ENCODE measurements at regions of chr2 and their contacts with region 1.

Region 1: DNA sequence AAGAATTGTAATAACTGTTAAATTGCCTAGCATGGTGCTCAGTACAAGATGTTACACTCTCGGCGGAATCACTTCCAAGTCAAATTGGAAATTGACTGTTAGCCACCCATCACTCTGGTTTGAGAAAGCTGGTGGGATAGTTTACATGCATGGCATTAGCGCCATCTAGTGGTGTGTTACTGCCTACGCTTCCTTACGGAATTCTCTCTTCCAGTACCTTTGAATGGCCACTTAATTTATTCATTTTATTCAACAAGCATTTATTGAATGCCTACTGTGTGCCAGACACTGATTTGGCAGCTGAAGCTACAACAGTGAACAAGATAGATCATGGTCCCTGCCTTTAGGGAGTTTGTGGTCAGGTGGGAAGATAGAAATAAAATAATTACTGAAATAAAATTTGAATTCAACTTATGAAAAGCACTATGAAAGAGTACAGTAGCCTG is 171.2 kb downstream of the TMEM247 start:
- DNase-seq: no peak
- H3K4me3 ChIP-seq: no peak overlapping the region
- H3K27ac ChIP-seq: no peak overlapping the region
- H3K4me1 ChIP-seq: peaks cover 0 to 19% (median 6%) of the 10 kb centered on the region in 6 donors
- H3K27me3 ChIP-seq: no peaks in the 10 kb centered on the region
- CTCF ChIP-seq: peak; percentile 88 to 98 (median 94)
- POLR2A ChIP-seq: no peak

Region 2: DNA sequence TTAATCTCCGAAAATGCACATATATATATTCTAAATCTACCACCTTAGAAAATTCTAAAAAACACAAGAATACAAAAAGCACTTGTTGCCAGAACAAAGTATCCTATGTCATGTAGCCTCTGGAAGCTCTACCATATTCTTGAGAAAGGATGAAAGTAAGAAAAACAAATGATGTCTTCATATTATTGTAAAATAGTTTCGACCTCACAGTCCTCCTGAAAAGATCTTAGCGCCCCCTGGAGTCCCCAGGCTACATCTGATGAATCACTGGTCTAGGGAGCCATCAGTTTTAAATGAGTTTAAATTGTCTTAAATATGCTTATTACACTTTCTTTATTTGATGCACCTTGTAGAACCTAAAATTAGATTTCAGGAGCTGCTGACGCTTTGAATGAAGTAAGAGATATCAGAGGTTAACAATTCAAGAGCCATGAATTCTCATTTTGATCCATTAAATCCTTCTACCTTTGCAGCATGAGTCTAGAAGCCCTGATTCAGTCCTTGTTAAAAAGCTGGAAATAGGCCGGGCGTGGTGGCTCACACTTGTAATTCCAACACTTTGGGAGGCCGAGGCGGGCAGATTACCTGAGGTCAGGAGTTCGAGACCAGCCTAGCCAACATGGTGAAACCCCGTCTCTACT is 126.2 kb after region 1 on chr2:
- intact Hi-C with region 1: loop called (anchors 10 kb)
- DNase-seq: no peak
- H3K4me3 ChIP-seq: no peak overlapping the region
- H3K27ac ChIP-seq: no peak overlapping the region
- H3K4me1 ChIP-seq: peaks cover 0 to 48% (median 9%) of the 10 kb centered on the region in 6 donors
- H3K27me3 ChIP-seq: peaks cover 0 to 4% (median 0%) of the 10 kb centered on the region in 7 donors
- CTCF ChIP-seq: peak in 9 of 11 experiments; percentile 38 to 78 (median 68)
- POLR2A ChIP-seq: no peak

Region 3: DNA sequence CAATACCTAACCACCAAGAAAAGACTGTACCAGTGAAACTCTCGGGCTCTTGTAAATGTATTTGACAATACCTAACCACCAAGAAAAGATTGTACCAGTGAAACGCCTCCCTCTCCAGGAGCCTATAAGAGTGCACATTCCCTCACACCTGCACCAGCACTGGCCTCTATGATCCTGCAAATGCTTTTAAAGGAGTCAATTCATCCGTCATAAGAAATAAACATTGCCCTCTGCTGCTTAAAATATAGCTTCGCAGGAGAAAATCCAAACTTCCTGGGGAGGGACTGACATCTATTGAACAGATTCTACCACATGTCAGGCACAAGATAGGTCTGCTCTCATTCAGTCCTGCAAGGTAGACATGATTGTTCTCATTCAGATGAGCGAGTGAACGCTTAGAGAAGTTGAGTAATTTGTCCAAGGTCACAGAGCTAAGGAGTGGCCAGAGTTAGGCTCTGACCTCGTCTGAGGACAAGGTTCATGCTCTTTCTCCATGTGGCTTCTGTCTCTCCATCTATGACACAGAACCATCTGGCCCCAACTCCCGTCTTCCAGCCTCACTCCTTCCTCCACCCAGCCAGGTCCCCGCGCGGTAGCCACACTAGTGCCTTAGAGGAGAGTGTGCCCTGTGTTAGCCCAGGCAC is 226.3 kb after region 1 on chr2:
- intact Hi-C with region 1: no loop called
- DNase-seq: no peak
- H3K4me3 ChIP-seq: no peak overlapping the region
- H3K27ac ChIP-seq: peak overlapping the region in 4 of 8 donors; percentile 37 to 88 (median 62)
- H3K4me1 ChIP-seq: peaks cover 0 to 34% (median 11%) of the 10 kb centered on the region in 6 donors
- H3K27me3 ChIP-seq: no peaks in the 10 kb centered on the region
- CTCF ChIP-seq: peak in 9 of 11 experiments; percentile 18 to 68 (median 54)
- POLR2A ChIP-seq: no peak

Measured in spleen (tissue), 13 donors.